HEK293 (cell line): ENCODE measurements at regions of chr11 and their contacts with region 1.

Region 1: GRCh38 chr11:6251120-6251733 is 8.4 kb upstream of the CCKBR start:
- H3K4me3 ChIP-seq: no peak overlapping the region
- H3K27ac ChIP-seq: no peak overlapping the region
- H3K4me1 ChIP-seq: no peaks in the 10 kb centered on the region
- CTCF ChIP-seq: no peak

Region 2: DNA sequence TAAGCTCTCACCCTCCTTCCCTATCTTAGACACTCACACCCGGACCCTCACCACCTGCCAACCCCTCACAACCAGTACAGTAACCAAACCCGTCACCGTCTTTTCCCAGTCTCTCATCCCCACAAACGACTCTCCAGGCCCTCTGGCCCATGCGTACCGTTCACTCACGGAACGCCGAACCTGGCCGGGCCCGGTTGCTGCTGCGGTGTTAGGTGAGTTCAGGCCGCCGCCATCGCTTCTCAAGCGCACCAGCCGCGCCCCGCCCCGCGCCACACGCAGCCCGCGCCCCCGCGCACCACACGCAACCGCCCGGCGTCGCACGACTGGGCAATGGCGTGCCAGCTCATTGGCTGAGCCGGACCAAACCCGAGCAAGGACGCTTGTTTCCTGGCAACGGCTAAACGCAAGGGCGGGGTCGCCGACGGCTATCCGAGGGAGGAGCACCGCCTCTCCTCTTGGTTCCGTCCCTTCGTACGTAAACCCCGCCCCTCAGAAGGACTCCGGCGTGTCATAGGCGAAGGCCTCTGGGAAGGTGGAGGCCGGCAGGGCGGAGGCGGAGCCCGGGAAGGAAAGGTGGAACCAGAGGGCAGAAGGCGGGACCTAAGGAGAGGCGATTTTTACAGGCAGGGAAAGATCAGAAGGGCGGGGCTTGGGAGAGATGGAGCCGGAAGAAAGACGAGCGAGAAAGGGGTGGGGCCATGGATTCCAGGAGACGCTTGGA is 16.7 kb before region 1 on chr11 and contains the start of gene FHIP1B:
- CTCF ChIA-PET with region 1: interaction called, 25 read pairs
- POLR2A ChIA-PET with region 1: interaction called, 16 read pairs
- H3K4me3 ChIP-seq: peak within 1 kb of the TSS; percentile 97
- H3K27ac ChIP-seq: peak within 1 kb of the TSS; percentile 47; the same call in 1 of the 2 replicates
- H3K4me1 ChIP-seq: no peaks in the 10 kb centered on the region
- CTCF ChIP-seq: no peak

Region 3: DNA sequence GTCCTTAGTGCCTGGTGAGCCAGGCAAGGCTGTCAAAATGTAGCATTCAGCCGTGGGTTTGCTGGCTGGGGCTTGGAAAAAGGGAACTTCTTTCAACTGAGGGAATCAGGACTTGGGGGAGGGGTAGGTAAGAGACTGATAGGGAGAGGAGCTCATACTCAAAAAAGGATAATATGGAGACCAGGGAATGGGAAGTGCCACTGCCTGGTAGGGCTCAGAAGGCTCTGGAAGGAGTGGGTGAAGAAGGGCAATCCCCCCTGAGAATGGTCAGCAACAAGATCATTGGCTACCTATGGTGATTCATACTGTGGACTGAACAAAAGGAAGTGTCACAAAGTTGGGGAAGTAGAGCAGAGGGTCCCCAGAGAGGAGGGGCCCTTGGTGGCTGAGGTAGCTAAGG is 10.4 kb before region 1 on chr11:
- CTCF ChIA-PET with region 1: interaction called, 25 read pairs
- POLR2A ChIA-PET with region 1: interaction called, 16 read pairs
- H3K4me3 ChIP-seq: no peak overlapping the region
- H3K27ac ChIP-seq: no peak overlapping the region
- H3K4me1 ChIP-seq: no peaks in the 10 kb centered on the region
- CTCF ChIP-seq: no peak

Region 4: GRCh38 chr11:6285019-6285418 is 33.8 kb after region 1 on chr11:
- CTCF ChIA-PET with region 1: interaction called, 14 read pairs
- POLR2A ChIA-PET with region 1: no interaction called
- H3K4me3 ChIP-seq: no peak overlapping the region
- H3K27ac ChIP-seq: no peak overlapping the region
- H3K4me1 ChIP-seq: no peaks in the 10 kb centered on the region
- CTCF ChIP-seq: no peak

Region 5: DNA sequence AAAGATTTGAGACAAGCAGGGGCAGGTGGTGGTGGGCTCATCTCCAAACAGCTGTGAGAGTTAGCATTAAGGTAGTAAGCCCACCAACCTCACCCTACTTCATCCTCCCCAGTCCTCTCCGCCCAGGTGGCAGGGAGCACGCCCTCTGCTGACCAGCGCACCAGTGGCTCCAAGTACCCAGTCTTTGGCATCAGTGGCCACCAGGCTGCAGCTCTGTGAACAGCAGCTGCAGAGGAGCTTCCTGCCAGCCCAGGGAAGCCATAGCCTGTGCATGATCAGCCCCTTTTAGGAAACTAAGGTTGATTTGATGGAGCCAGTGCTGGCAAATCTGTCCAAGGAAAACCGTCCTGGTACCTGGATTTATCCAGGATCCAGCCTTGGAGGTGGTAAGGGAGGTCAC is 47.4 kb after region 1 on chr11:
- CTCF ChIA-PET with region 1: interaction called, 11 read pairs
- POLR2A ChIA-PET with region 1: no interaction called
- H3K4me3 ChIP-seq: no peak overlapping the region
- H3K27ac ChIP-seq: no peak overlapping the region
- H3K4me1 ChIP-seq: no peaks in the 10 kb centered on the region
- CTCF ChIP-seq: peak; percentile 48

Region 6: GRCh38 chr11:6307876-6308275 is 56.6 kb after region 1 on chr11:
- CTCF ChIA-PET with region 1: interaction called, 20 read pairs
- POLR2A ChIA-PET with region 1: no interaction called
- H3K4me3 ChIP-seq: no peak overlapping the region
- H3K27ac ChIP-seq: no peak overlapping the region
- H3K4me1 ChIP-seq: no peaks in the 10 kb centered on the region
- CTCF ChIP-seq: no peak

Region 7: DNA sequence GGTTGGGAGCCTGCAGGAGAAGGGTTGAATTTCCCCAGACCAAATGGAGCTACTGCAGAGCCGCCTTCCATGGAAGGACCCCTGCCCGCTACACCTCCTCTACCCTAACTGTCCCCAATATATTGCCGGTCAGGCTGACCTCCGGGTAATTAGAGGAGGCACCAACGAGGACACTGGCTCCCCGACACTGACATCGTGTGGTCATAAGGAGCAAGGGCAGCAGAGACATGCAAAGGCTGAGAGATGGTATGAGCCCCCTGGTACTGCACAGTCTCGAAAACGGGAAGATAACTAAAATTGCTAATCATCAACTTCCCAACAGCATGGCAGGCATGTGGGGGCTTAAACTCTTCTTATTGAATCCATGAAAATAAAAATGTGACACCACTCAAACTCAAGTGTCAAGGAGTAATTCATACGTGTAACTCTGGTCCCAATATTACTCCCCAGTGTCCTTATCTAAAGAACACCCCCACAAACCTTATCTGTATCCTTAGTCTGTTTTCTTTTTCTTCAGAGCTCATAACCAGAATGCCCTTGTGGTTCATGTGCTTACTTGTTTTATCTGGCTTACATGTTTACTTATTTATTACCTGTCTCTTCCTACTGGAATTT is 64.7 kb after region 1 on chr11:
- CTCF ChIA-PET with region 1: interaction called, 113 read pairs
- POLR2A ChIA-PET with region 1: no interaction called
- H3K4me3 ChIP-seq: no peak overlapping the region
- H3K27ac ChIP-seq: no peak overlapping the region
- H3K4me1 ChIP-seq: no peaks in the 10 kb centered on the region
- CTCF ChIP-seq: peak; percentile 39; the same call in 1 of the 2 replicates